ENCODE measurements at regions of chr13 and their contacts with region 1.

Region 1: DNA sequence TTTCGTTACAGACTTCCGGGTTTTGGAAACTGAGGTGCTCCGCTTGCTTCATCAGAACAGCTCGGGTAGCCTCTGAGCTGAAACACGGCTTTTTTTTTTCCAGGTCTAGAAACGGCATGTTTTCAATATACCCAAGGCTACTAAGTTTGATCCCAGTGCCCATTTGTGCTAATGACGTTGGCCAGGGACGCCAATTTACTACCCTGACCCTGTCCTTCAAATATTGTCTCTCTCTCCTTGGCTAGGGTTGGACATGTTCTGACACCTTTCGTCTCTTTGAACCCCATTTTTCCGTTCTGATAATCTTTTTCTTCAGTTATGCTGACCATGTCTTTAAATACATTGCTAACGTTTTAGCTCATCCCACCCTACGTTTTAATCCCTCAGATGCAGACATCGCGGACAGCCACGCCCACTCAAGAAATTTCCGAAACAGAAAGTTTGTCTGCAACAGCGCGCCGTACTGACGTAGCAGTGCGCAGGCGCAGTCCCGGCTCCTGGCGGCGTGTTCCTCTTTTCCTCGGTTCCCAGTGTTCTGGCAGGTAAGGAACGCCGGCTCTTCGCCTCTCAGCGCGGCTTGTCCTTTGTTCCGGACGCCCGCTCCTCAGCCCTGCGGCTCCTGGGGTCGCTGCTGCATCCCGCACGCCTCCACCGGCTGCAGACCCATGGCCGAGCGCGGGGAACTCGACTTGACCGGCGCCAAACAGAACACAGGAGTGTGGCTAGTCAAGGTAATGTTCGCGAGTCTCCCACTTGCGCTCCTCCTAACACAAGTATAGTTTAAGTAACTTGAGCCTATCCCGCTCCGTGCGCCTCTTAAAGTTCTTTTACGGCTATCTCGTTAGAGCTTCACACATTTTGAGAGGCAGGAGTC is at the start of gene GTF2F2:
- DNase-seq: peak; percentile 77 to 94 (median 82)
- ATAC-seq: peak; percentile 59
- H3K4me3 ChIP-seq: peak within 1 kb of the TSS; percentile 75
- H3K4me3 Mint-ChIP-seq: no peak within 1 kb of the TSS
- H3K27ac ChIP-seq: peak within 1 kb of the TSS; percentile 83 to 92
- H3K27ac Mint-ChIP-seq: no peak within 1 kb of the TSS
- H3K4me1 ChIP-seq: peaks cover 23% of the 10 kb centered on the region
- H3K4me1 Mint-ChIP-seq: peaks cover 12% of the 10 kb centered on the region
- H3K27me3 ChIP-seq: no peaks in the 10 kb centered on the region
- H3K27me3 Mint-ChIP-seq: no peaks in the 10 kb centered on the region
- CTCF ChIP-seq: no peak
- total RNA-seq, gene GTF2F2: 11.7 to 14.8 TPM

Region 2: GRCh38 chr13:44141725-44142539 is 978.3 kb before region 1 on chr13:
- CTCF ChIA-PET with region 1: no interaction called
- POLR2A ChIA-PET with region 1: no interaction called
- intact Hi-C with region 1: loop called in 1 of 2 experiments (anchors 5 kb)
- DNase-seq: peak; percentile 76 to 95 (median 90)
- ATAC-seq: peak; percentile 96
- H3K4me3 ChIP-seq: peak overlapping the region; percentile 84
- H3K4me3 Mint-ChIP-seq: peak overlapping the region; percentile 93
- H3K27ac ChIP-seq: peak overlapping the region; percentile 48 to 76
- H3K27ac Mint-ChIP-seq: peak overlapping the region; percentile 77
- H3K4me1 ChIP-seq: peaks cover 15% of the 10 kb centered on the region
- H3K4me1 Mint-ChIP-seq: peaks cover 16% of the 10 kb centered on the region
- H3K27me3 ChIP-seq: no peaks in the 10 kb centered on the region
- H3K27me3 Mint-ChIP-seq: no peaks in the 10 kb centered on the region
- CTCF ChIP-seq: no peak

Region 3: GRCh38 chr13:45047394-45048310 is 72.6 kb before region 1 on chr13:
- CTCF ChIA-PET with region 1: no interaction called
- POLR2A ChIA-PET with region 1: no interaction called
- intact Hi-C with region 1: loop called (anchors 1 to 5 kb)
- DNase-seq: peak; percentile 64 to 88 (median 72)
- ATAC-seq: peak; percentile 95
- H3K4me3 ChIP-seq: peak overlapping the region; percentile 40
- H3K4me3 Mint-ChIP-seq: peak overlapping the region; percentile 78
- H3K27ac ChIP-seq: no peak overlapping the region
- H3K27ac Mint-ChIP-seq: no peak overlapping the region
- H3K4me1 ChIP-seq: peaks cover 10% of the 10 kb centered on the region
- H3K4me1 Mint-ChIP-seq: peaks cover 6% of the 10 kb centered on the region
- H3K27me3 ChIP-seq: peaks cover 0 to 9% of the 10 kb centered on the region in 2 experiments
- H3K27me3 Mint-ChIP-seq: peaks cover 6% of the 10 kb centered on the region
- CTCF ChIP-seq: peak; percentile 88

Region 4: GRCh38 chr13:45332036-45332830 is 212.0 kb after region 1 on chr13:
- CTCF ChIA-PET with region 1: no interaction called
- POLR2A ChIA-PET with region 1: no interaction called
- intact Hi-C with region 1: loop called (anchors 10 kb)
- DNase-seq: peak in 1 of 14 experiments; percentile 18
- ATAC-seq: no peak
- H3K4me3 ChIP-seq: no peak overlapping the region
- H3K4me3 Mint-ChIP-seq: no peak overlapping the region
- H3K27ac ChIP-seq: no peak overlapping the region
- H3K27ac Mint-ChIP-seq: peak overlapping the region; percentile 84
- H3K4me1 ChIP-seq: peaks cover 84% of the 10 kb centered on the region
- H3K4me1 Mint-ChIP-seq: peaks cover 94% of the 10 kb centered on the region
- H3K27me3 ChIP-seq: no peaks in the 10 kb centered on the region
- H3K27me3 Mint-ChIP-seq: no peaks in the 10 kb centered on the region
- CTCF ChIP-seq: no peak

Region 5: DNA sequence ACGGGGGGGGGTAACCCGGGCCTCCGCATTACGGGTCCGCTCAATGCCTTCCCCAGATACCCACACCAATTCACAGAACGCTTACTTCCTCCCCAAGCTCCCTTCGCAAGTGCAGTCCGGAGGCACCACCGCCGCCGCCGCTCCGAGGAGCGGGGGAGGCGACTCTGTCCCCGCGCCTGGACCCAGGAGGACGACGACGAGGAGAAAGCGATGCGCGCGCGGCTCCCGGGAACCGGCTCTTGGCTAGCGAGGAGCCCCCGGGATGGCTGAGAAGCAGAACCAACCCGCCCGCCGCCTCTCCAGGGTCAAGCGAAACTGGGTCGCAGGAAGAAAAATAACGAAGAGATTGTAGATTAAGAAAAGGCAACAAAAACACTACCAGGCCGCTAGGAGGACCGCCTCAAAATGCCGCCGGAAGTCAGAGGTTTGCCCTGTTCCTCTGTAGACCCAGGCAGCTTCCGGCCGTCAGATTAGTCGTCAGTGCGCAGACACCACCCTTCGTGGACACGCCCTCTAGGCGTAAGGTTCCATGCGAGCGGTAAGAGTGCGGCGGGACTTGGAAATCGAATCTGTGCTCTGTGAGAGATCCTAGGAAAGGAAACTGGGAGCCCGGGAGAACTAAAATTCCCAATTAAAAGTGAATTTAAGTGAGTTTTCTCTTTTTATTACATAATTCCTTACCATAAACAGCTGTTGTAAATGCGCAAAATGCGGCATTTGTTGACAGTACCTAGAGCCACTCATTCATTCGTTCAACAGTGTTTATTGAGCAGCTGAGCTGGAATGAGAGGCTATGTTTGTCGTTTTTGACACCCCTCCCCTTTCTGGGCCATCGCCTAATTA is 932.3 kb after region 1 on chr13 and contains the start of gene ZC3H13:
- CTCF ChIA-PET with region 1: no interaction called
- POLR2A ChIA-PET with region 1: no interaction called
- intact Hi-C with region 1: loop called in 1 of 2 experiments (anchors 5 kb)
- DNase-seq: peak; percentile 87 to 98 (median 89)
- ATAC-seq: peak; percentile 96
- H3K4me3 ChIP-seq: peak within 1 kb of the TSS; percentile 84
- H3K4me3 Mint-ChIP-seq: peak within 1 kb of the TSS; percentile 91
- H3K27ac ChIP-seq: peak within 1 kb of the TSS; percentile 97
- H3K27ac Mint-ChIP-seq: peak within 1 kb of the TSS; percentile 86
- H3K4me1 ChIP-seq: peaks cover 2% of the 10 kb centered on the region
- H3K4me1 Mint-ChIP-seq: peaks cover 53% of the 10 kb centered on the region
- H3K27me3 ChIP-seq: peaks cover 0 to 10% of the 10 kb centered on the region in 2 experiments
- H3K27me3 Mint-ChIP-seq: peaks cover 22% of the 10 kb centered on the region
- CTCF ChIP-seq: peak; percentile 48
- total RNA-seq, gene ZC3H13: 36.5 to 43.8 TPM